T-cell (primary cell): ENCODE measurements at regions of chr2 and their contacts with region 1.

Region 1: GRCh38 chr2:151881342-151881741 is 53.1 kb upstream of the ARL5A start:
- DNase-seq: no peak
- ATAC-seq: no peak
- H3K4me3 ChIP-seq: no peak overlapping the region
- H3K4me3 Mint-ChIP-seq: no peak overlapping the region
- H3K27ac ChIP-seq: no peak overlapping the region
- H3K27ac Mint-ChIP-seq: no peak overlapping the region
- H3K4me1 ChIP-seq: no peaks in the 10 kb centered on the region
- H3K4me1 Mint-ChIP-seq: no peaks in the 10 kb centered on the region
- H3K27me3 ChIP-seq: no peaks in the 10 kb centered on the region
- H3K27me3 Mint-ChIP-seq: no peaks in the 10 kb centered on the region

Region 2: GRCh38 chr2:150847578-150847977 is 1033.8 kb before region 1 on chr2:
- CTCF ChIA-PET with region 1: no interaction called
- POLR2A ChIA-PET with region 1: interaction called in 1 of 2 experiments, 15 read pairs
- DNase-seq: no peak
- ATAC-seq: no peak
- H3K4me3 ChIP-seq: no peak overlapping the region
- H3K4me3 Mint-ChIP-seq: no peak overlapping the region
- H3K27ac ChIP-seq: no peak overlapping the region
- H3K27ac Mint-ChIP-seq: no peak overlapping the region
- H3K4me1 ChIP-seq: no peaks in the 10 kb centered on the region
- H3K4me1 Mint-ChIP-seq: no peaks in the 10 kb centered on the region
- H3K27me3 ChIP-seq: peaks cover 0 to 9% of the 10 kb centered on the region in 2 experiments
- H3K27me3 Mint-ChIP-seq: peaks cover 2 to 10% of the 10 kb centered on the region in 2 donors

Region 3: GRCh38 chr2:152078662-152079061 is 197.3 kb after region 1 on chr2:
- CTCF ChIA-PET with region 1: no interaction called
- POLR2A ChIA-PET with region 1: no interaction called
- DNase-seq: no peak
- ATAC-seq: no peak
- H3K4me3 ChIP-seq: no peak overlapping the region
- H3K4me3 Mint-ChIP-seq: no peak overlapping the region
- H3K27ac ChIP-seq: no peak overlapping the region
- H3K27ac Mint-ChIP-seq: no peak overlapping the region
- H3K4me1 ChIP-seq: no peaks in the 10 kb centered on the region
- H3K4me1 Mint-ChIP-seq: no peaks in the 10 kb centered on the region
- H3K27me3 ChIP-seq: peaks cover 0 to 2% of the 10 kb centered on the region in 2 experiments
- H3K27me3 Mint-ChIP-seq: no peaks in the 10 kb centered on the region

Region 4: GRCh38 chr2:152134488-152135280 is 253.3 kb after region 1 on chr2:
- CTCF ChIA-PET with region 1: no interaction called
- POLR2A ChIA-PET with region 1: no interaction called
- DNase-seq: no peak
- ATAC-seq: no peak
- H3K4me3 ChIP-seq: no peak overlapping the region
- H3K4me3 Mint-ChIP-seq: no peak overlapping the region
- H3K27ac ChIP-seq: no peak overlapping the region
- H3K27ac Mint-ChIP-seq: peak overlapping the region in 1 of 2 donors; percentile 24
- H3K4me1 ChIP-seq: no peaks in the 10 kb centered on the region
- H3K4me1 Mint-ChIP-seq: peaks cover 0 to 7% (median 2%) of the 10 kb centered on the region in 3 donors
- H3K27me3 ChIP-seq: no peaks in the 10 kb centered on the region
- H3K27me3 Mint-ChIP-seq: no peaks in the 10 kb centered on the region